ENCODE measurements at regions of chr3 and their contacts with region 1.

Region 1: GRCh38 chr3:52529376-52530333 is 4.0 kb downstream of the NT5DC2 start:
- DNase-seq: peak; percentile 58 to 71
- ATAC-seq: no peak
- H3K4me3 ChIP-seq: no peak overlapping the region
- H3K27ac ChIP-seq: no peak overlapping the region
- H3K4me1 ChIP-seq: no peaks in the 10 kb centered on the region
- H3K27me3 ChIP-seq: no peaks in the 10 kb centered on the region

Region 2: GRCh38 chr3:52471371-52472238 is 58.0 kb before region 1 on chr3:
- intact Hi-C with region 1: loop called (anchors 5 kb)
- DNase-seq: peak; percentile 83 to 90
- ATAC-seq: peak; percentile 65
- H3K4me3 ChIP-seq: no peak overlapping the region
- H3K27ac ChIP-seq: no peak overlapping the region
- H3K4me1 ChIP-seq: no peaks in the 10 kb centered on the region
- H3K27me3 ChIP-seq: no peaks in the 10 kb centered on the region

Region 3: DNA sequence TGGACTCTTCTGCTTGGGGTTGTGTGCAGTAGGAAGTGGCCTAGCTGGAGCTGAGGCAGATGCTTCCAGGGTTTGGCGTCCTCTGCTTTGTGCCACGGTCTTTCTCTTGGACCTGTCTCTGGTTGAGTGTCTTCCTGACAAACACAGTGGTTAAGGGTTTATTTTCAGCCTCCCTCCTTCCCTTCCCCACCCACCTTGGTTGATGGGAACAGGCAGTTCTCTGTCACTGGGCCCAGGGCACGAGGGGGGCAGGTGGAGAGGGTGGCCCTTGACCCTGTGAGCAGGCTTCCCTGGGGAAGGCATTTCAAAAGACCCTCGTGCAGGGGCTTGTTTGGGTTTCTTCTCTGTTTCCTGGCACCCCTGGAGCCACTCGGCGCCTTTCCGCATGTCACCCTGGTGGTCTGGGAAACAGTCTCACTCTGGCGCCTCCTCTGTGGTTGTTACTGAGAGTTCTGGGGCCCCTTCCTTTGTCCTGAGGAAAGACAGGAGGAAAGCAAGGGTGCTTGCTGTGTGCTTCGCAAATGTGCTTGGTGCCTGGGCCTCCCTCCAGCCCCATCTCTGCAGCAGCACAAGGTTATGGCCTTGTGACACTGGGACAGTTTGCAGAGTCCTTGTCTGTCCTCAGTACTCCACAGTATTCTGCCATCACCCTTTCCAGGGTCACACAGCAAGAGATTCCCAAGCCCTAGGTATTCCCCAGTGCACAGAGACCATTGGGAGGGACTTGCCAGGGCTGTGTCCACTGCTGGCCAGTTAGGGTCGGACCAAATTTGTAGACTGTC is 44.8 kb before region 1 on chr3:
- intact Hi-C with region 1: loop called in 1 of 2 experiments (anchors 5 kb)
- DNase-seq: no peak
- ATAC-seq: no peak
- H3K4me3 ChIP-seq: no peak overlapping the region
- H3K27ac ChIP-seq: peak overlapping the region in 1 of 2 donors; percentile 0
- H3K4me1 ChIP-seq: no peaks in the 10 kb centered on the region
- H3K27me3 ChIP-seq: no peaks in the 10 kb centered on the region

Region 4: DNA sequence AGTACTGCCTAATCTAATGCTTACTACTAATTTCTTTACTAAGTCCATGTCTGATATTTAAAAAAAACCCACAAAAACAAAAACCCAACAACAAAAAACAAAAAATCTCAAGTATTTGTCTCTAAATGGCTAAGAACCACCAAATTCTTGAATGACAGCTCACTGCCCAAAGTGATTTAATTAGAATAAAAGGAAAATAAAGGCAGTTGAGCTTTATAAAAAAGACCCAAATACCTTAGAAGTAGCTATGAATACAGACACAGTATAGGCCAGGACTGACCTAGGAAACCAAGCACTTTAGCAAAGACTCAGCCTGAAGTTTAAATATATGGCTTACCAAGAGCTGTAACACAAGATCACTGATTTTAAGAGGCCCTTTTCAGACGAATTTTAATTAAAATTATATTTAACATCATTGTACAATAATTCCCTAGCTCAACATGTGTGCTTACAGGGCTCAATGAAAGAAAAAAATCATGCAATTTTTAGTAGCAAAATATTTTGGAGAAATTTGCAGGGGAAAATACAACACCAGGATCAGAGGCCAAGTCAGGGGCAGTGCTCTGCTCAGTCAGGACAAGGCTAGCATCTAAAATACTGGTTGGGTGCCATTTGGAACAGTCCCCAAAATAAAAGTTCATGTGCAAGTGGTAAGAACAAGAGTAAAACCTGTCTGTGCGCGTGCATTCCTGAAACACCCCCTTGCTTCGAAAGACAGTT is 31.5 kb after region 1 on chr3:
- intact Hi-C with region 1: no loop called
- DNase-seq: no peak
- ATAC-seq: no peak
- H3K4me3 ChIP-seq: no peak overlapping the region
- H3K27ac ChIP-seq: no peak overlapping the region
- H3K4me1 ChIP-seq: no peaks in the 10 kb centered on the region
- H3K27me3 ChIP-seq: no peaks in the 10 kb centered on the region

Region 5: DNA sequence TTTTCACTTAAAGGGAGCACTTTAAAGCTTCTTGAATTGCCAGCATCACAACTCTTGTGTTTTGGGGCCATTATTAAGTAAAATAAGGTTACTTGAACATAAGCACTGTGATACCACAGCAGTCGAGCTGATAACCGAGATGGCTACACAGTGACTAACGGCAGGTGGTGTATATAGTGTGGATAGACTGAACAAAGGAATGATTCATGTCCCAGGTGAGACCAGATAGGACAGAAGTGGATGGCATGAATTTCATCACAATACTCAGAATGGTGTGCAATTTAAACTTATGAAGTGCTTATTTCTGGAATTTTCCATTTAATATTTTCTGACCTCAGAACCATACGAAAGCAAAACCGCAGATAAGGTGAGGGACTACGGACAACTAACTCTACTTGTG is 115.9 kb after region 1 on chr3:
- intact Hi-C with region 1: no loop called
- DNase-seq: no peak
- ATAC-seq: no peak
- H3K4me3 ChIP-seq: no peak overlapping the region
- H3K27ac ChIP-seq: no peak overlapping the region
- H3K4me1 ChIP-seq: no peaks in the 10 kb centered on the region
- H3K27me3 ChIP-seq: no peaks in the 10 kb centered on the region